ENCODE measurements at regions of chr2 and their contacts with region 1.

Region 1: DNA sequence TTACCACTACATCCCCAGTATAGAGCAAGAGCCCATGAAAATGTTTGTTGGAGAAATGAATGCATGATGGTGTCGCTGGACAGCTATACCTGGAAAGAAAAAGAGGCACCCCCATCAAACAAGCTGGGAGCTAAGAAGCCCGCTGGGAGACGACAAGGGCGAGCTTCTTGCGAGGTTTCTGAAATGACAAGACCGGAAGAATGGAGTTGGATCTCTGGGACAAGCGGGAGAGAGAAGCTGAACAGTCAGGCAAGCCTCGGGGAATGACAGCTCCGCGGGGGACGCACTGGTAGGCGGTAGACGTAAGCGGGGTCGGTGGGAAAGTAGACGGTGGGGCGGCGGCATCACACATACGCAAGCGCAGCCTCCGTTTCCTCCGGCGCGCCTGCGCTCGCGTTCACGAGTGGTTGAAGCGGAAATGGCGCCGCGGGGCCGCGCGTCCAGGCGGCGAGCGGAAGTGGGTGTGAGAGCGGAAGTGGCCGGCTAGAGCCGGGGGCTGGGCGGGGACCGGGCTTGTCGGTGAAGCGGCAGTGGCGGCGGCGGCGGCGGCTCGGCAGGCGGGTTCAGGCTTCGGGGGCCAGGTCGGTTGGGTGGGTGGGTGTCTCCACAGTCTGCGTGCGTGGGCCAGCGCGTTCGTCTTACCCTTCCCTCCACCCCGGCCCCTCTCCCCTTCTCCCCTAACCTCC is at the start of gene ARPC2:
- DNase-seq: peak; percentile 95
- H3K4me3 Mint-ChIP-seq: peak within 1 kb of the TSS; percentile 78
- H3K27ac Mint-ChIP-seq: peak within 1 kb of the TSS; percentile 88
- H3K4me1 Mint-ChIP-seq: peaks cover 29% of the 10 kb centered on the region
- H3K27me3 Mint-ChIP-seq: no peaks in the 10 kb centered on the region
- total RNA-seq, gene ARPC2: 461 to 475 TPM

Region 2: DNA sequence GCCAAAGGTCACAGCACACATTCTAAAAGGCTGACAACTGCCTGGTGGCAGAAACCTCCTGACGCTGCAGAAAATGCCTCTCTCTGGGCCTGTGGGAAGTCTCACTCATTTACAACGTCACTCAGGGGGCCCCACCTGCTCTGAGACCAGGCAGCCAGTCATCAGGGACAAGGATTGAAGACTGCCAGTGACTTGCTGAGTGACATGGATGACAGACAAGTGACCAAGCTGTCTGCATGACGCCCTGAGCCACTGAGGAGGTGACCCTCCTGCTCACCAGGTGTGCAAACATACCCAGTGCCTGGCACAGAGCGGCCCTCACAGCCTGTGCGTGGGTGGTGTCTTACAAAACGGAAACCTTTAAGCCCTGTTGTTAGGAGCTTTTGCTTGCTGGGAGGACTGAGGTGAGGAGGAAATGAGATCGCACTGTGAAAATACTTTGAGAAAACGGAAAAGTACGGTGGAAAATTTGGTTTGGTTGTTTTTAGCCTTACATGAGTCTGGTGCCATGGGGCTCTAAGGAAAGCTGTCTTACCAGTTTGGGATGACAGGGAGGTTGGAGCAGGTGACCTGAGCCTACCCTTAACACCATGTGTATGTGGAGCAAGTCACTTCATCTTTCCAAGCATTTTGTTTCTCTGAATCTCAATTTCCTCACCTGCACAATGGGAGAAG is 606.3 kb before region 1 on chr2:
- CTCF ChIA-PET with region 1: no interaction called
- intact Hi-C with region 1: loop called (anchors 5 kb)
- DNase-seq: peak; percentile 89
- H3K4me3 Mint-ChIP-seq: peak overlapping the region; percentile 25
- H3K27ac Mint-ChIP-seq: peak overlapping the region; percentile 84
- H3K4me1 Mint-ChIP-seq: peaks cover 54% of the 10 kb centered on the region
- H3K27me3 Mint-ChIP-seq: no peaks in the 10 kb centered on the region

Region 3: DNA sequence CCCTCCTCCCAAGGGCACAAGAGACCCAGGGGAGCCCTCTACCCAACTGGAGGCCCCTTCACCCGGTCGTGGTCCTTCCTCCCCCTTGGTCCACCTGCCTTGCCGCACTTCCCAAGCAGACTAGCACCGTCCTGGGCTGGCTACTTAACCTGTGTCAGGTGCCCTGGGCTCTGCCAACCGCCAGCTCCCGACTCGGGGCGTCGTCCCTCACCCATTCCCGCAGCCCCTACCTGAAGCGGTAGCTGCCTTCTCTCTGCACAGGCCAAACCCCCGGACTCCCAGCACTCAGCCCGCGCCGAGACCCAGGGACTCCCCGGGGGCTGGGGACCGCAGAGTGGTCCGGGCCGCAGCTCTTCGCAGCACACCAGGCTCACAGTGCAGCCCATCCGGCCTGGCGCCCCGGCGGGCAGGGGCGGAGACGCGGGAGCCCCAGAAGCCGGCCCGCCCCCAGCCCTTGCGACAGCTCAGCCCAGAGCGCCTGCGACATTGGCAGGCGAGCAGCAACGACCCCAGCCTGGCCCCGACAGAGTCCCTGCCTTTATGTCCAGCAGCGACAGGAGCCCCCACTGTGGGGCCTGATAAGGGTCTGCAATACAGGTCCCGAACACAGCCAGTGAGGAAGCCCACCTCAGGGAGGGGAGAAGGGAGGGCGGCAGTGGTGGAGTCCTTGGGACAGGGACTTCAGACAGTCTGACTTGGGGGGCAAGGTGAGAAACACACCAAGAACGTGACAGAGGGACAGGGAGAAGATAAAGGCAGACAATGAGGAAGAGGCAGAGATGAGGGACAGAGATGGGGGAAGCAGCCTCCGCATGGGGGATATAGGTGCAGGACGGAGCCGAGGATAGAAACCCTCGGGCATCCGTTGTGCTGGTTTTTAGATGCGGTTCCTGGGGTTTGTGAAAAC is 183.0 kb before region 1 on chr2:
- CTCF ChIA-PET with region 1: no interaction called
- intact Hi-C with region 1: no loop called
- DNase-seq: no peak
- H3K4me3 Mint-ChIP-seq: peak overlapping the region; percentile 58
- H3K27ac Mint-ChIP-seq: no peak overlapping the region
- H3K4me1 Mint-ChIP-seq: peaks cover 3% of the 10 kb centered on the region
- H3K27me3 Mint-ChIP-seq: no peaks in the 10 kb centered on the region

Region 4: DNA sequence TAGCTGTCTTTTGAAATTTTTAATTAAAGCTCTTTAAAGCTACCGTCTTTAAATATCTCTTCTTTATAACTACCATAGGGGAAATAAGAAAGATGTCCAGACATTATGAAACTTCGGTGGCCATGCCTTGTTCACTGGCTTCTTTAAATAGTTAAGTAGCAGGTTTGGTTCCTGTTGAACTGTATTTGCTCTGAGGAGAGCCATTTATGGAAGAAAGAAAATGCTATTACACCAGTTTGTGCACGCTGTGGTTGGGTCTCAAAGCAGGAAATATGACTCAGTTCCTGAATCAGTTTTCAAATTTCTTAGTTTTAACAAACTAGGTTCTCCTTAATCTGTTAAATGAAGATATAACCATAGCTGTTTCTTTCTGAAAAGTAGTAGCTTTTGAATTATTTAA is 12.4 kb after region 1 on chr2:
- CTCF ChIA-PET with region 1: interaction called, 36 read pairs
- intact Hi-C with region 1: loop called (anchors 1 kb)
- DNase-seq: peak; percentile 66
- H3K4me3 Mint-ChIP-seq: peak overlapping the region; percentile 32
- H3K27ac Mint-ChIP-seq: peak overlapping the region; percentile 87
- H3K4me1 Mint-ChIP-seq: peaks cover 81% of the 10 kb centered on the region
- H3K27me3 Mint-ChIP-seq: no peaks in the 10 kb centered on the region

Region 5: GRCh38 chr2:218286570-218287459 is 70.0 kb after region 1 on chr2:
- CTCF ChIA-PET with region 1: interaction called, 5 read pairs
- intact Hi-C with region 1: loop called (anchors 1 kb)
- DNase-seq: peak; percentile 95
- H3K4me3 Mint-ChIP-seq: peak overlapping the region; percentile 80
- H3K27ac Mint-ChIP-seq: peak overlapping the region; percentile 98
- H3K4me1 Mint-ChIP-seq: peaks cover 73% of the 10 kb centered on the region
- H3K27me3 Mint-ChIP-seq: no peaks in the 10 kb centered on the region

Region 6: DNA sequence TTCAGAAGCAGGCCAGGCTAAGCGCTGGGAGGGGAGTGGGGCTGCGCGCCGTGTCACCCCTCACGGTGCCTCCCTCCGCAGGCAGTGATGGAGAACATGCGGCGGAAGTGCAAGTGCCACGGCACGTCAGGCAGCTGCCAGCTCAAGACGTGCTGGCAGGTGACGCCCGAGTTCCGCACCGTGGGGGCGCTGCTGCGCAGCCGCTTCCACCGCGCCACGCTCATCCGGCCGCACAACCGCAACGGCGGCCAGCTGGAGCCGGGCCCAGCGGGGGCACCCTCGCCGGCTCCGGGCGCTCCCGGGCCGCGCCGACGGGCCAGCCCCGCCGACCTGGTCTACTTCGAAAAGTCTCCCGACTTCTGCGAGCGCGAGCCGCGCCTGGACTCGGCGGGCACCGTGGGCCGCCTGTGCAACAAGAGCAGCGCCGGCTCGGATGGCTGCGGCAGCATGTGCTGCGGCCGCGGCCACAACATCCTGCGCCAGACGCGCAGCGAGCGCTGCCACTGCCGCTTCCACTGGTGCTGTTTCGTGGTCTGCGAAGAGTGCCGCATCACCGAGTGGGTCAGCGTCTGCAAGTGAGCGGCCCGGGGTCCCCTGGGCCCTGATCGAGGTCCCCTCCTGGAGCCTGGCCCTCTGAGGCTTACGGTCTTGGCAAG is 676.0 kb after region 1 on chr2:
- CTCF ChIA-PET with region 1: no interaction called
- intact Hi-C with region 1: loop called (anchors 5 kb)
- DNase-seq: peak; percentile 90
- H3K4me3 Mint-ChIP-seq: peak overlapping the region; percentile 75
- H3K27ac Mint-ChIP-seq: peak overlapping the region; percentile 76
- H3K4me1 Mint-ChIP-seq: peaks cover 45% of the 10 kb centered on the region
- H3K27me3 Mint-ChIP-seq: no peaks in the 10 kb centered on the region